Activated CD8-positive, alpha-beta T cell treated with anti-CD3 and anti-CD28 coated beads, Interleukin-2, amount 10 ng/mL, durations not matched to agents 7 days and 5 days (primary cell): ENCODE measurements at regions of chr11 and their contacts with region 1.

Region 1: GRCh38 chr11:85854557-85855340 is 434 bp upstream of the CCDC83 start:
- DNase-seq: peak; percentile 93
- ATAC-seq: peak; percentile 96
- H3K4me3 Mint-ChIP-seq: peak overlapping the region; percentile 84
- H3K27ac Mint-ChIP-seq: peak overlapping the region; percentile 91
- H3K4me1 Mint-ChIP-seq: peaks cover 13% of the 10 kb centered on the region
- H3K27me3 Mint-ChIP-seq: peaks cover 7% of the 10 kb centered on the region

Region 2: GRCh38 chr11:85682330-85683305 is 172.1 kb before region 1 on chr11:
- CTCF ChIA-PET with region 1: interaction called, 10 read pairs
- POLR2A ChIA-PET with region 1: interaction called, 4 read pairs
- DNase-seq: peak; percentile 72
- ATAC-seq: peak; percentile 93
- H3K4me3 Mint-ChIP-seq: peak overlapping the region; percentile 74
- H3K27ac Mint-ChIP-seq: peak overlapping the region; percentile 78
- H3K4me1 Mint-ChIP-seq: peaks cover 19% of the 10 kb centered on the region
- H3K27me3 Mint-ChIP-seq: peaks cover 13% of the 10 kb centered on the region

Region 3: DNA sequence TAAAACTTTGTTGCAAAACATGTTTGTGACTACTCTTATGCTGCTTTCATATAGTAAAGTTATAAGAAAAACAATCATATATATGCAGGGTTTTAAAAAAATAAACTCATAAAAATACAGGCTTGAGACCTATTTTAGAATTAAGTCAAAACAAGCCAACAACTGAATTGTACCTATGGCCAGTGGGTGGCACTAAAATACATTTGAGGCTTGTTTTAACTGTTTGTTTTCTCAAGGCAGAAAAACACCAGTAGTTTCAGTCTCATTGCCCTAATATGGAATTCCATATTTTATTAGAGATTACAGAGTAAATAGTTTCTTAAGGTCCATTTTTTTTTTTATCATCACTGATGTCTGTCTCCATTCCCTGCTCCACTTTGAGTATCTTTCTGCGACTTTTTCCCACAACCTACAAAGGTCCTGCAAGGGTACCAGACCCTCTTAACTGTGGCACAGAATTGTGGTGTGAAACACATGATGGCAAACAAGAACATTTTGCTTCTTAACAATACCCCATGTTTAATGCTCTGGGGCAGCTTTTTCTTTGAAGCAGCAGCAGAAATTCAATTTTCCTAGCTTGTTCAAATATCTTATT is 160.3 kb before region 1 on chr11:
- CTCF ChIA-PET with region 1: interaction called, 31 read pairs
- POLR2A ChIA-PET with region 1: interaction called, 6 read pairs
- DNase-seq: peak; percentile 48
- ATAC-seq: no peak
- H3K4me3 Mint-ChIP-seq: no peak overlapping the region
- H3K27ac Mint-ChIP-seq: no peak overlapping the region
- H3K4me1 Mint-ChIP-seq: peaks cover 43% of the 10 kb centered on the region
- H3K27me3 Mint-ChIP-seq: peaks cover 2% of the 10 kb centered on the region

Region 4: GRCh38 chr11:85699957-85700741 is 154.6 kb before region 1 on chr11:
- CTCF ChIA-PET with region 1: interaction called, 31 read pairs
- POLR2A ChIA-PET with region 1: interaction called, 6 read pairs
- DNase-seq: no peak
- ATAC-seq: peak; percentile 84
- H3K4me3 Mint-ChIP-seq: peak overlapping the region; percentile 1
- H3K27ac Mint-ChIP-seq: peak overlapping the region; percentile 31
- H3K4me1 Mint-ChIP-seq: peaks cover 42% of the 10 kb centered on the region
- H3K27me3 Mint-ChIP-seq: no peaks in the 10 kb centered on the region

Region 5: GRCh38 chr11:85826116-85826855 is 28.5 kb before region 1 on chr11:
- CTCF ChIA-PET with region 1: interaction called, 34 read pairs
- POLR2A ChIA-PET with region 1: no interaction called
- DNase-seq: peak; percentile 42
- ATAC-seq: no peak
- H3K4me3 Mint-ChIP-seq: no peak overlapping the region
- H3K27ac Mint-ChIP-seq: peak overlapping the region; percentile 37
- H3K4me1 Mint-ChIP-seq: peaks cover 58% of the 10 kb centered on the region
- H3K27me3 Mint-ChIP-seq: peaks cover 3% of the 10 kb centered on the region

Region 6: DNA sequence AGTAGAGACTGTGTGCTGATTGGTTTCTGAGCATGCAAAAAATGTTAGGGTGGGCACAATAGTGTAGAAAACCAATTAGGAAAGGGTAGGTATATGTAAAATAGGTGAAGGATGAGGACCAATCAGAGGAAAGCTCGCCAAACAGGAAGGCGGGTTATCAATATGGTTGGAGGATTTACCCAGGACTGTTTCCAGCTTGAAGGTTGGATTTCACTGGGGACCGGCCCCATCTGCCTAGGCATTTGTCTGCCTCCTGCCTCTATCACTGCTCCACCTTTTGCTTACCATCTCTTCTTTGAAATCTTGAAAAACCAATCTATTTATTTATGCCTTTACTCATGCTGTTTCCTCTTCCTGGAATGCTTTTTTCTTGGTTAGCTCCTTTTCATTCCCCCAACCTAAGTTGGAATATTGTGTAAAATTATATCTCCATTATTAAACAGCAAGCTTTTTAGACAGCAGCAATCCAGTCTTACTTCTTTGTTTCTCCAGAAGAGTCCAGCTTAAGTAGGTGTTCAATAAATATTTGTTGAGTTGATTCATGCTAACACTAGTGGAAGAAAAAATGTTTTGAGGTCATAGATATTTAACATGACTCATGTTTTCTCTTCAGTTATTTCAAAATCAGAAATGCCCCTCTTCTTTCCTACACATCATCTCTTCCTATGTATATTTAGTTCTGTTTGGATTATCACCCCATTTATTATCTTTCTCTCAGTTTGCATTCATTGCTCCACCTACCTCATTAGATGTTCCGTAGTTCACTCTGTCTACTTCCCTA is 20.6 kb after region 1 on chr11:
- CTCF ChIA-PET with region 1: no interaction called
- POLR2A ChIA-PET with region 1: no interaction called
- DNase-seq: no peak
- ATAC-seq: no peak
- H3K4me3 Mint-ChIP-seq: no peak overlapping the region
- H3K27ac Mint-ChIP-seq: no peak overlapping the region
- H3K4me1 Mint-ChIP-seq: no peaks in the 10 kb centered on the region
- H3K27me3 Mint-ChIP-seq: peaks cover 9% of the 10 kb centered on the region

Region 7: DNA sequence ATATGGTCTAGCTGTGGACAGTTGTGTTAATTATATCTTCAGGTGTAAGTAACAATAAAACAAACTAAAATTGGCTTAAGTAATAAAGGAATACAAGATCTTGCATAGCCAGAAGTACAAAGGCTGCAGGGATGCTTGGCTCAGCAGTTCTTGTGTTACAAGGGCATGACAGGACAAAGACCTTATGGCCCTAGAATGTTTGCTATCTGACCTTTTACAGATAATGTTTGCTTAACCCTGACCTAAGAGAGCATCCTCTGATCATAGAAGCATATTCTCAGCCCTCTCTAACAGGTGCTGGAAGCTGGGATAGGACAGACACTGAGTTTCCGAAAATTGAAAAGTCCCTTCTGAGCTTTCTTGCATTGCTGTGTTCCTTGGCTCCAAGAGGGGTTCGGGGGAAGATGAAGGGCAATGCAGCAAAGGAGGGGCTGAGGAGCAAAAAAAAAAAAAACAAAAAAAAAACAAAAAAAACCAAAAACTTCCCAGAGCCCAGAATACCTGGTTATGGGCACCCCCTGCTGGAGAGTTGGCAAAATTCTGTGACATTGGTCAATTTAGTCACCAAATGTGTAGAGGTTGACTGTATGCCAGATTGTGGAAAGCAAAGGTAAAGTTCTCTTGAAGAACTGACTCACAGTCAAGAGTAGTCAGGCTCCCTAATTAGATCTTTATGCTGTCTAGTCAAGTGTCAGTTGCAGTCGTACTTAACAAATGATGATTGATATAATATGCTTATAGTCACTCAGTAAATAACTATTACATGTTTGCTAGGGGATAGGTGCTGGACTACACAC is 436.9 kb after region 1 on chr11:
- CTCF ChIA-PET with region 1: interaction called, 26 read pairs
- POLR2A ChIA-PET with region 1: no interaction called
- DNase-seq: peak; percentile 71
- ATAC-seq: peak; percentile 48
- H3K4me3 Mint-ChIP-seq: no peak overlapping the region
- H3K27ac Mint-ChIP-seq: no peak overlapping the region
- H3K4me1 Mint-ChIP-seq: peaks cover 44% of the 10 kb centered on the region
- H3K27me3 Mint-ChIP-seq: peaks cover 4% of the 10 kb centered on the region